GM10248 (cell line): ENCODE measurements at regions of chr15 and their contacts with region 1.

Region 1: GRCh38 chr15:61195116-61196002 is 33.7 kb downstream of the RORA start:
- DNase-seq: peak; percentile 38
- CTCF ChIP-seq: peak; percentile 60

Region 2: DNA sequence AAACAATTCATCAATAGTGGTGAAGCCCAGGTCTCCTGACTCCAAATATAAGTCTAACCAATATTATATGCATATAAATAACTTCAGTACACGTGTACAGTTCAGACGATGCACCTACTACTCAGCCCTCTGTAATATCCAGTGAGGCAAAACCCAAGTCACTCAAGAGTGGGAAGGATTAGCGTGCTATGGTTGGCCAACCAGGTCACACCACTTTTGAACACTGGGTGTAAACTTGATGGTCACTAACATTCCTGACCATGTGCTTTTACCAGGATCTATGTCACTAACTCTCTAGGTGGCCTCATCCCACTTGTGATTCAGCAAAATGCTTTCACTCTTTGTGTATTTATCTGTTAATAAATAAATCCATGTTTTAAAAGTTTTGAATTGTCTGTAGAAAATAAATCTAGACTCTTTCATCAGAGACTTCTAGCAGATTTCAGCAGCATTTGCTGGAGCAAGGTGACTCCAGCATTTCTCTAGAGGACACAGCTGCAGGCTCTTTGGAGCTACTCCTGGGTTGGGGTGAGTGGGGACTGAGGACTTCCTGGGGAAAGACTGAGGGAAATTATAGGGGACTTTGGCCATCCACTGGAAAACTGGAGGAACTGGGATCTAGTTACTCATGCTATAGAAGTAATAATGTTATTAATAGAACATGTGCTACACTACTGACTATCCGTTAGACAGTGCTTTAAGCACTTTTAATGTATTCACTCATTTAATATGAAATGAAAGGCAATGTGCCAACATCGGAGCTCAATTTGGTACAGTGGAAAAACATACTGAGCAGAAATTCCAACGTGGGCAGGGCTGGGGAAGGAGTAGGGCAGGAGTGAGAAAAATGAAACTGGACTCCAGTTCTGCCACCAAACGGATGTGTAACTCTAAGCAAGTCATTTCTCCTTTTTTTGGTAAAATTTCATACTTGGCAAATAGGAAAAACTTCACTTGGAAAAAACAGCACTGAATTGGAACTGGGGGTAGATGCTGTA is 64.1 kb before region 1 on chr15:
- CTCF ChIA-PET with region 1: no interaction called
- POLR2A ChIA-PET with region 1: no interaction called
- DNase-seq: no peak
- CTCF ChIP-seq: no peak

Region 3: DNA sequence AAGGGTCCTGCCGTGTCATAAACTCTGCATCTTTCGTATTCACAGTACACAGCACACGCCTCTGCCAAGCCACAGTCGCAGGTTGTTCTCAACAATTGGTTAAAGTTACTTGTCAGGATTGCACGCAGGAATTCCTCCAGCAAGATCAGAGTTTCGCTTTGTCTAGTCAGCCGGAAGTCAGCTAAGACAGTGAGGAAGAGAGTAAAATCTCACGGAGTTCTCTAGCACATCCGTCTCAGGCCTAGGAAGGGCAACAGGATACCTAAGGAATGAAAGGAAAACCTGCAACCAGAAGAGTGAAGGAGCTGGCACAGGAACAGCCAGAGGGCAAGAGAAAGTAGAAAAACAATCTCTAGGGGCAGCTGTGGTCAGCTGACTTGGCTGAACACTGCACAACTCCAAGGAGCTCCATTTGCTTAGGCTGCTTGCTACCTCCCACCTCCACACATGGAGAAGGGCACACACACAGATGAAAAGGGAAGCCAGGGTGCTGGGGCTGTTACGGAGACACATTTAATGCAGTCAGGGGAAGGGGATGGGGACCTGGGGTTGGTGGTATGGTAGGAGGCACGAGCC is 10.1 kb after region 1 on chr15:
- CTCF ChIA-PET with region 1: interaction called, 35 read pairs
- POLR2A ChIA-PET with region 1: no interaction called
- DNase-seq: no peak
- CTCF ChIP-seq: no peak

Region 4: DNA sequence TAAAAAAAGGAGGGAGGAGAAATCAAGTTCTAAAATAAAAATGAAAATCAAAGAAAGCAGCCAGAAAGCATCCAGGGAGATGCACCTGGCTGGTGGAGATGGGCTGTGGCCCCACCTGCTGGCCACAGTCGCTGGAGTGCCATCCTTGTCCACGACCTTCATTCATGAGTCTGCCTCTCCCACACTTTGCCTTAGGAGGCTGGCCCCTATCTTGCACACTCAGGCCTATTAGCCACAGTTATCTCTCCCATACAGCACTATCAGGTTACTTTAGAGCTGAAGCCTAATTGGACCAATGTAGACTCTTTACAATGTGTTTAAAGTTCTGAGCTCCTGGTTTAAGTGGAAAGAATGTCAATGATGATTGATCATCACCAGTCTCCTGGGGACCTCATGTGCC is 425.8 kb after region 1 on chr15:
- CTCF ChIA-PET with region 1: interaction called, 10 read pairs
- POLR2A ChIA-PET with region 1: no interaction called
- DNase-seq: no peak
- CTCF ChIP-seq: peak; percentile 47